Right cardiac atrium (tissue), 5 donors: ENCODE measurements at regions of chr3 and their contacts with region 1.

Region 1: DNA sequence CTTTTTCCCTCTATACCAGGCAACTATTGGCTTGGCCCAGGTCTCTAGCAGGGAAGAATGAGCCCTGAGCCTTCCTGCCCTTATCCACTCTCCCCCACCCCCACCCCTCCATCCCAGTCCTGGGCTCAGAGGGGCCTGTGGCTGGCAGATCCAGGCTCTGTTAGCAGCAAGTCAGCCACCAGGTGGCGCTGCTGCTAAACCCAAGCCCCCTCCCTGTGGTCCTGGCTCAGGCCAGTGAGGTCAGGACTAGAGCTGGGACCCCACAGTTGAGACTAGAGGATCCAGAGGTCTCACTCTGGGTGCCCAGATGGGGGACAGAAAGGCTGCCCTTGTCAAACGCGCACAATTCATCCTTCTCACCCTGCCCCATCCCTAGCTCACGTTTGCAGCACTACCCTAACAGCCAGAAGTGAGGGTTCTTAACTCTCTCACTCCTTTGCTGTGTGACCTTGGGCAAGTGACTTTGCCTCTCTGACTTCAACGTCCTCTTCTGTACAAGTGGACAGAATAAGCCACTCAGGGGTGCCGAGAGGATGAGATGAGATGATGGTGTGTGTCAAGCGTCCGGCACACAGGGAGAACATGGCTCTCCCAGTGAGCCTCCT is 46.8 kb upstream of the SLC6A1 start:
- DNase-seq: peak; percentile 59 to 86 (median 85)
- ATAC-seq: peak; percentile 77 to 86
- H3K4me3 ChIP-seq: no peak overlapping the region
- H3K27ac ChIP-seq: no peak overlapping the region
- H3K4me1 ChIP-seq: no peaks in the 10 kb centered on the region
- H3K27me3 ChIP-seq: no peaks in the 10 kb centered on the region

Region 2: DNA sequence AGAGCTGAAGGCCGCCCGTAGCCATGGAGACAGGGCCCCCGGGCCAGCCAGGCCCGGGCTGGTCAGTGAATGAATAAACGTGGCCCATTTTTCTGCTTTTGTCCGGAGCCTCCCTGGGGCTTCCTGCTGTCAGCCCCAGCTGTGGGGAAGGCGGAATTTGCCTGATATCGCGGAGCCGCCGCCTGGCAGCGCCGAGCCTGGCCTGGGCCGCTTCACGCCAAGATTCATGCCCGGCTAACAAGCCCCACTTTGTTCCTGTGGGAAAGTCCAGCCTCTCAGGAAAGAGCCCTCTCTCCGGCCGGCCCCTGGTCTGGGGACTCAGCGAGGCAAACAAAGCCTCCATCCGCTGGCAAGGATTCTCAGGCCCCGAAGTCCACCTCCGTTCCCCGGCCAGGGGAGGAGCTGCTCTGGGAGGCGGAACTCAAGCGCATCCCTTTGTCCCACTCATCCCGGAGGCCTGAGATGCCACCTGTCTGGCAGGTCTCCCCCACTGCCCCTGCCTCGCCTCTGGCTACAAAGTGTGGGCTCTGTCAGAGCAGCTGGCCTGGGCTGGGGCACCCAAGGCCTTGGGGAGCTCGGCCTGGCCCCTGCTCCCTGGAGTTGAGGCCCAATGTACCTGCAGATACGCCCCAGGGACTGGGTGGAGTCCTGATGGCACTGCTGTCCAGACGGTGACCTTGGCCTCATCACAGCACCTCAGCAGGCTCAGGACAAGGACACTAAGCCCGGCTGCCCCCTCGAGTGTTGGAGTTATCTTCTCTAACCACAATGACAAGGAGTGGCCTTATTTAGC is 181.3 kb before region 1 on chr3:
- intact Hi-C with region 1: loop called in 1 of 4 experiments (anchors 10 kb)
- DNase-seq: no peak
- ATAC-seq: no peak
- H3K4me3 ChIP-seq: no peak overlapping the region
- H3K27ac ChIP-seq: no peak overlapping the region
- H3K4me1 ChIP-seq: no peaks in the 10 kb centered on the region
- H3K27me3 ChIP-seq: no peaks in the 10 kb centered on the region

Region 3: GRCh38 chr3:10983219-10983916 is 37.6 kb after region 1 on chr3:
- intact Hi-C with region 1: loop called in 1 of 4 experiments (anchors 2 kb)
- DNase-seq: no peak
- ATAC-seq: peak; percentile 46 to 66
- H3K4me3 ChIP-seq: no peak overlapping the region
- H3K27ac ChIP-seq: no peak overlapping the region
- H3K4me1 ChIP-seq: peaks cover 14% of the 10 kb centered on the region
- H3K27me3 ChIP-seq: no peaks in the 10 kb centered on the region

Region 4: DNA sequence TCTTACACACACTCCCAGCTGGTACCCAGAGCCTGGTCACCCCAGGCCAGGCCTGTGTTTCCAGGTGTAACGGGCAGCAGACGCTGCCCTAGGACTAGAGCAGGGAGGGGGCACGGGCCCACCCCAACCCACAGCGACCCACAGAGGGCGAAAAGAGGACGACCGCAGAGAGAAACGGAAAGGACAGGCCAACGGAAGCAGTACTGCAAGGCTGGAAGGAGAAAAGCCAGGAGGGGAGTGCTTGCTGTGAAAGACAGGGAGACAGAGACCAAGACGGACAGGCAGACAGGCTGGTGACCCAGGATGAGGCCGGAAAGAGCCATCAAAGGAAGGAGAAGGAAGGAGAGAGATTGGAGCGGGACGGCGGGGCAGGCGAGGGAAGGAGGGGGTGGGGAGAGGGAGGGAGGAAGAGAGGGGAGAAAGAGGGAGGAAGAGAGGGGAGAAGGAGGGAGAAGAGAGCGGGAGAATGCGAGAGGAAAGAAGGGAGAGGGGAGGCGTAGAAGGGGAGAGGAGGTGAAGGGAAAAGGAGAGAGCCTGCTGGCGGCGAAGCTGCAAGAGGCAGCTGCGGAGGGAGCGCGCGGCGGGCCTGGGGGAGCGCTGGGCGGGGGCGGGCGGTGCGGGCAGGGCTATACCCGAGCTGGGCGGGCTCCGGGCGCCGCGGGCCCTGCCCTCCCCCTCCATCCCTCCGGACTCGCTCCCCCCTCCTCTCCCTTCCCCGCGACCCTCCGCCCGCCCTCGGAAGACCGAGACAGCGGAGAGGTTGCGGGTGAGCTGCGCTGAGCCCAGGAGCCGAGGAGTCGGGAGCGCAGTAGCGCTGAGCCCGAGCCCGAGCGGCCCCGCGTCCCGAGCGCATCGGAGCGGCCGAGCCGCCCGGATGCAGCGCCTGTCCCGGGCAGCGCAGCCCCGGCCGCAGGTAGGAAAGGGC is 46.5 kb after region 1 on chr3 and contains the start of gene SLC6A1:
- intact Hi-C with region 1: loop called in 1 of 4 experiments (anchors 5 kb)
- DNase-seq: peak in 2 of 3 donors; percentile 71 to 76
- ATAC-seq: peak; percentile 76 to 84
- H3K4me3 ChIP-seq: peak within 1 kb of the TSS; percentile 55
- H3K27ac ChIP-seq: no peak within 1 kb of the TSS
- H3K4me1 ChIP-seq: no peaks in the 10 kb centered on the region
- H3K27me3 ChIP-seq: no peaks in the 10 kb centered on the region
- total RNA-seq, gene SLC6A1: 0.89 to 3.3 (median 2.5) TPM

Region 5: GRCh38 chr3:11477407-11477911 is 531.7 kb after region 1 on chr3:
- intact Hi-C with region 1: no loop called
- DNase-seq: no peak
- ATAC-seq: peak; percentile 56 to 63
- H3K4me3 ChIP-seq: no peak overlapping the region
- H3K27ac ChIP-seq: peak overlapping the region; percentile 76
- H3K4me1 ChIP-seq: peaks cover 14% of the 10 kb centered on the region
- H3K27me3 ChIP-seq: no peaks in the 10 kb centered on the region